ENCODE measurements at regions of chr16 and their contacts with region 1.

Region 1: DNA sequence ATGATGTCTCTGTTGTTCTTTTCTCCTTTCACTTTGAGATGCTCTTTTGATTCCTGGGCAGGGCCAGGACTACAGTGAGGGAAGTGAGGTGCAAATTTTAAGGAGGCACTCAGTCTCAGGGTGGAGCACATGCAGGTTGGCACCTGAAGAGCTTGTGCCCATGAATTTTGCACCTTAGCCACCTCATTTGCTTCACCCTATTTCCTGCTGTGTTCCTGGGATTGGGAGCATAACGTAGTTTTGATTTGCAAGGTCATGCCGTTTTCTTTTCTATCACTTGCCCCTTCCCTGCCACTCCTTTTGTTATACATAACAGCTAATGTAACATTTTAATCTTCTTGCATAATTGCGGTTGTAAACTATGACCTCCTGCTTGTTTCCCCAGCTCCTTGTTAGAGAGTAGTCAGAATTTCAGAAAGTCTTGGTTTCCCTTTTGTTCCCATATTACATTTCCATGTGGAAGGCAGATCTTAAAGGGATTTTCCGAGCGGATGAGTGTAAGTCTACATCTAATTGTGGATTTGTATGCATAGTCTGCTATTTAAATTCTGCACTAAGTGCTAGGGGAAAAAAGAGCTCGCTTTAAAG is 9.8 kb downstream of the PMFBP1 start:
- DNase-seq: no peak
- ATAC-seq: no peak

Region 2: DNA sequence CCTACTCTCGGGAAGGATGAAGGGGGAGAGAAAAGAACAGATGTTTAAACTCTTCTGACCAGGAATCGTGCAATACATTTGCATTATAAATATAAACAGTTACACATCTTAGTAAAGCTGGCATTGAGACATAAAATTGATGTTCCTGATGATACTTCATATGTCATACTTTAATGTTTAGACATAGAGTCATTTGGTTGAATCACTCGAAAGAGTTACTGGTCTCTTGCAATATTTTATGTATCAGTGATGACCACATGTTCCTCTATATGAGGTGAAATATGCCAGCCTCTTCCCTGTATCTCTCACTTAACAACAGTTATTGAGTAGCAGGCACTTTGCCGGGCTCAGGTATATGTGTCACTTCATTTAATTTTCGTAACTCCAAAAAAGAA is 59.4 kb after region 1 on chr16:
- intact Hi-C with region 1: loop called in 1 of 2 experiments (anchors 10 kb)
- DNase-seq: no peak
- ATAC-seq: no peak

Region 3: DNA sequence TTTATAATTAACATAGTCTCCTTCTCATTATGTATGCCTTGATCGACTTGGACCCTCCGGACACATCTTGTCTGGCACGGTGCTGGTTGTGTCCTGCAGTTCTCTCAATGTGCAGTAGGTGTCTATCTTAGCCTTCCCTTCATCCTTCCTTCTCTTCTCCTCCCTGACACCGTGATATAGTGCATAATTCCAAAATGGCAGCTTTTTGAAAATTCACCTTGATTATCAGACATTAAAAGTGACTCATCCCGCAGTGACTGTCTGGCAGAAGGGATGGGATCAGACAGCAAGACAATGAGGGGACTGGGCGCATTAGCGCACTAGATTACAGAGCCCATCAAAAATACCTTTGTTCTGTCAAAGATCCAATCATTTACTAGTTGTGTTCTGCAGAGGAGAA is 79.7 kb after region 1 on chr16:
- intact Hi-C with region 1: no loop called
- DNase-seq: peak; percentile 21
- ATAC-seq: peak in 1 of 2 donors; percentile 87

Measured in left cardiac atrium (tissue), 4 donors.